ENCODE measurements at regions of chr15 and their contacts with region 1.

Region 1: DNA sequence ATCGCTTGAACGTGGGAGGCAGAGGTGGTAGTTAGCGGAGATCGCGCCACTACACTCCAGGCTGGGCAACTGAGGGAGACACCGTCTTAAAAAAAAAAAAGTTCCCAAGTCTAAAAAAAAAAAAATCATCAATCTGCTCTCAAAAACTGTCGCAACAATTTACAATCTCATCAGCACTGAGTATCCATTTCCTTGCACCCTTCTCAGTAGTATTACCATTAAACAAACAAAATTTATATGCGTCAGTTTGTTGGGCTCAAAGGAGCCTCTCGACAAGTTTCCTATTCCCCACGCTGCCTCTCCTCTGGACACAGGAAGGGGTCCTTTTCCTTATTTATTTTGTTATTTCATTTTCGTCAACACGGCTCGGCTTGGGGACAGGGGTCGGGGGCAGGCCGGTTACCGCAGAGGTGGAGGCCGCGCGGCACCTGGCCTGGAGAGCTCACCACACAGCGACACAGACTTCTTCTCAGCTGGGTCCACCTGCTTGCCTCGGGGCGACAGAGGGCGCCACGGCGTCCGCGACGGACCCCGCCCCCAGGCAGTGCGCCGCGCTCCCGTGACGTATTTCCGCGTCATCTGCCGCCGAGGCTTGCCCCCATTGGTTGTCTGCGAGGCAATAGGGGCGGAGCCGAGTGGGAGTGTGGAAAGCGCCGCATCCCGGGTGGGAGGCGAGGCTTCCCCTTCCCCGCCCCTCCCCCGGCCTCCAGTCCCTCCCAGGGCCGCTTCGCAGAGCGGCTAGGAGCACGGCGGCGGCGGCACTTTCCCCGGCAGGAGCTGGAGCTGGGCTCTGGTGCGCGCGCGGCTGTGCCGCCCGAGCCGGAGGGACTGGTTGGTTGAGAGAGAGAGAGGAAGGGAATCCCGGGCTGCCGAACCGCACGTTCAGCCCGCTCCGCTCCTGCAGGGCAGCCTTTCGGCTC is at the start of gene MAP2K1:
- DNase-seq: peak; percentile 99
- ATAC-seq: peak; percentile 99
- total RNA-seq, gene MAP2K1: 40.4 TPM

Region 2: GRCh38 chr15:66440501-66440900 is 54.0 kb after region 1 on chr15:
- intact Hi-C with region 1: no loop called
- DNase-seq: no peak
- ATAC-seq: no peak

Region 3: DNA sequence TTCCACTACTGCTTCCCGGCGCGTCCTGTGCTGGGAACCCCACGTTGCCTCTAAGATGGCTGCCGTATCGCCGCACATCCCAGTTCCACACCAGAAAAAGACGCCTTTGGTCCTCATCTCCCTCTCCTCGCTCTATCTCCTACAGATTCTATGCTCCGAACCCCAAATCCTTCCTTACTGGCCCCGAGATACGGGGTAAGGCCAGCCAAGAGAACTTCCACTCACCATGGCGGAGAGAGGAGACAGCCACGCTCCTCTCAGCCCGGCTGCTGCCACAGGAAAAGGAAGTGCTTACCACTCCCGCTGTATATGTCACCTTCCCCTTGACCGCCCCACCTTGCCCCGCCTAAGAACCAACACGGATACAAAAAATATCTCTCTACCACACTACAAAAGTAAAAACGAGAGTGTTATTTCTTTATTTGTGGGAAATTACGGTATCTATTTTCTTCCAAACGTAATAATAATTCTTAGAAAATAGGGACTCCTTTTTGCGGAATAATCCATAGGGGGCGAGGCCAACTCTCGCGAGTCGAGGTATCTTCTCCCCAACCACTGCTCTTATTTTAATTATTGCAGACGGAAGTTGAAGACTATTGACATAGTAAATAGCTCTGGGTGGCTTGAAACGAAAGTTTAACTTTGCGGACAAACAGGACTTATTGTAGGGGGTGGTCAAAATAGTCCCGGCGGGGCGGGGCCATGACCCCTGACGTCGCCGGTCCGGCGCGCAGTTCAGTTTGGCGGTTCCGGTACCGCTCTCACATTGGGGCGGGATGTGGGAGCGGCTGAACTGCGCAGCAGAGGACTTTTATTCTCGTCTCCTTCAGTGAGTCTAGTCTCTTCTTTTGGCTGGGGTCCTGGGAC is 118.3 kb after region 1 on chr15 and contains the starts of genes RPL4 and ZWILCH:
- intact Hi-C with region 1: loop called (anchors 5 kb)
- DNase-seq: peak; percentile 86
- ATAC-seq: peak; percentile 96
- total RNA-seq, gene RPL4: 1,305 TPM
- total RNA-seq, gene ZWILCH: 1.8 TPM